ENCODE measurements at regions of chr12 and their contacts with region 1.

Region 1: GRCh38 chr12:56189176-56189917 is at the start of gene SMARCC2:
- DNase-seq: peak; percentile 91
- ATAC-seq: peak; percentile 87
- H3K4me3 ChIP-seq: peak within 1 kb of the TSS; percentile 61 to 89 (median 85)
- H3K4me3 Mint-ChIP-seq: peak within 1 kb of the TSS; percentile 98
- H3K27ac ChIP-seq: peak within 1 kb of the TSS; percentile 75 to 86
- H3K27ac Mint-ChIP-seq: peak within 1 kb of the TSS; percentile 97
- H3K4me1 ChIP-seq: peaks cover 19 to 34% of the 10 kb centered on the region in 2 donors
- H3K4me1 Mint-ChIP-seq: peaks cover 48% of the 10 kb centered on the region
- H3K27me3 ChIP-seq: no peaks in the 10 kb centered on the region
- H3K27me3 Mint-ChIP-seq: no peaks in the 10 kb centered on the region
- CTCF ChIP-seq: peak; percentile 72
- total RNA-seq, gene SMARCC2: 195 and 198 TPM in 2 replicates

Region 2: DNA sequence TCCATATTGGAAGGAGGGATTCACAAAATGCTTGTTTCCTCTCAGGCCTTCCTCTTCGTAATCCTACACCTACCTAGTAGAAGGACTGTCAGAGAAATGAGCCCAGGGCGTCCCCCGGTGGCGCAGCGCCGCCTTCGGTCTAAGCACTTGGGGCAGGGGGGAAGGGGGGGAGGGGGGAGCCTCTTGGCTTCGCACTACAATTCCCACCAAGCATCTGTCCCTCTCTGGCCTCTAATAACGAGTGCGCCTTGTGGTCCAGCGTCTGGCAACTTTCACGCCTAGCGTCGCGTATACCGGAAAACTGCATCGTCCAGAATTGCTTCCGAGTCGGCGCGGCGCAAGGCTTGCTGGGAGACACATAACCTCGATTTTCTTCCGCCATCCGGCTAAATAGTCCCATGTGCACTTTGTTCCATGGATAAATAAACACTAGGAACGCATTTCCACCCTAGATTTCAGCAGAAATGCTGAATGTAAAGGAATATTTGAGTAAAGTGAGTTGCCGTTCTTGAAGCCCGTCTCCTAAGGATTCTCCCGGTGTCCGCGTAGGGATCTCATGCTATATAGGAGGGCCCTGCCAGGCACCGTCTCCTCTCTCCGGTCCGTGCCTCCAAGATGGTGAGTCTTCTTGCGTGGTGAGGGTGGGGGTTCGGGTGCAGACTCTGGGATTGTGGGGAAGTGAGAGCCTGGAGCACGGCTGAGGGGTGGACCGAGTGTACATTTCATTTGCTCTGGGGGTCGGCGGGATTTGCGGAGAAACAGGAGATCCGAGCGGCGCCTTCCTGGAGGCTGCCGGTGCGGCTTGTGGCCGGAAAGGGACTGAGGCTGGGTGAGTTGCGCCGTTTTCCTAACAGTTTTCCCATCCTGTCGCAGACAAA is 147.6 kb before region 1 on chr12 and contains the start of gene RPS26:
- CTCF ChIA-PET with region 1: interaction called, 8 read pairs
- POLR2A ChIA-PET with region 1: interaction called, 4 read pairs
- intact Hi-C with region 1: loop called (anchors 10 kb)
- DNase-seq: peak; percentile 99
- ATAC-seq: peak; percentile 93
- H3K4me3 ChIP-seq: peak within 1 kb of the TSS; percentile 70 to 99 (median 91)
- H3K4me3 Mint-ChIP-seq: peak within 1 kb of the TSS; percentile 98
- H3K27ac ChIP-seq: peak within 1 kb of the TSS; percentile 82 to 90
- H3K27ac Mint-ChIP-seq: peak within 1 kb of the TSS; percentile 97
- H3K4me1 ChIP-seq: peaks cover 19 to 21% of the 10 kb centered on the region in 2 donors
- H3K4me1 Mint-ChIP-seq: peaks cover 24% of the 10 kb centered on the region
- H3K27me3 ChIP-seq: no peaks in the 10 kb centered on the region
- H3K27me3 Mint-ChIP-seq: no peaks in the 10 kb centered on the region
- CTCF ChIP-seq: peak; percentile 67
- total RNA-seq, gene RPS26: 19.4 and 21.0 TPM in 2 replicates

Region 3: DNA sequence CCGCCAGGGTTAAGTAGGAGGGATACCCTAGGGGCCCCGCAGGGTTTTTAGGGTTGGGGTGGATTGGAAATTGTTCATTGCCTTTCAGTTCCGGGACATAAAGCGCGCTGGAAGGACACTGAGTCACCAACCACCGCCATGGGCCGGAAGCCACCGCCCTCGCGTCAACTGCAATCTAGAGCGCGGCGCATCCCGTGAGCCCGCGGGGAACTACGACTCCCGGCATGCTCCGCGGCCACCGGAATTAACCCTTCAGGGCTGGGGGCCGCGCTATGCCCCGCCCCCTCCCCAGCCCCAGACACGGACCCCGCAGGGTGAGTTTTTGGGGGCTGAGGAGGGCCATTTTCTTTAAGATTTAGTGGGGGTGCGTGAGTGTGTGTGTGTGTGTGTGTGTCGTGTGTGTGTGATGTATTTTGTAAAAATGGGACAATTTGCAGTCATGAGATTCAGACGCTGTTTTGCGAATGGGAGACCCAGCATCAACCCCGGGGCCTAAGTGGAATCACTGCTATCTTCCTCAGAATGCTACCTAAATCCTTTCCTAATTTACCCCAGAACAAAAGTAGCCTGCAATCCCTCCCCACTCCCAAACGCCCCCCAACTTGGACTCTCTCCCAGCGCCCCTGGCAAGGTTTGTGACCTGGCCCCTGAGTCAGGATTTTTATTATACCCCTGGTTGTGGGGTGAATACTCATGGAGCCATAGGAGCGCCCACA is 36.9 kb before region 1 on chr12 and contains the start of gene MYL6B:
- CTCF ChIA-PET with region 1: interaction called, 14 read pairs
- POLR2A ChIA-PET with region 1: interaction called, 14 read pairs
- intact Hi-C with region 1: no loop called
- DNase-seq: peak; percentile 91
- ATAC-seq: peak; percentile 91
- H3K4me3 ChIP-seq: peak within 1 kb of the TSS; percentile 54 to 89 (median 81)
- H3K4me3 Mint-ChIP-seq: peak within 1 kb of the TSS; percentile 94
- H3K27ac ChIP-seq: peak within 1 kb of the TSS; percentile 74 to 88
- H3K27ac Mint-ChIP-seq: peak within 1 kb of the TSS; percentile 98
- H3K4me1 ChIP-seq: peaks cover 15 to 29% of the 10 kb centered on the region in 2 donors
- H3K4me1 Mint-ChIP-seq: peaks cover 36% of the 10 kb centered on the region
- H3K27me3 ChIP-seq: no peaks in the 10 kb centered on the region
- H3K27me3 Mint-ChIP-seq: no peaks in the 10 kb centered on the region
- CTCF ChIP-seq: no peak
- total RNA-seq, gene MYL6B: 23.7 and 25.7 TPM in 2 replicates

Region 4: DNA sequence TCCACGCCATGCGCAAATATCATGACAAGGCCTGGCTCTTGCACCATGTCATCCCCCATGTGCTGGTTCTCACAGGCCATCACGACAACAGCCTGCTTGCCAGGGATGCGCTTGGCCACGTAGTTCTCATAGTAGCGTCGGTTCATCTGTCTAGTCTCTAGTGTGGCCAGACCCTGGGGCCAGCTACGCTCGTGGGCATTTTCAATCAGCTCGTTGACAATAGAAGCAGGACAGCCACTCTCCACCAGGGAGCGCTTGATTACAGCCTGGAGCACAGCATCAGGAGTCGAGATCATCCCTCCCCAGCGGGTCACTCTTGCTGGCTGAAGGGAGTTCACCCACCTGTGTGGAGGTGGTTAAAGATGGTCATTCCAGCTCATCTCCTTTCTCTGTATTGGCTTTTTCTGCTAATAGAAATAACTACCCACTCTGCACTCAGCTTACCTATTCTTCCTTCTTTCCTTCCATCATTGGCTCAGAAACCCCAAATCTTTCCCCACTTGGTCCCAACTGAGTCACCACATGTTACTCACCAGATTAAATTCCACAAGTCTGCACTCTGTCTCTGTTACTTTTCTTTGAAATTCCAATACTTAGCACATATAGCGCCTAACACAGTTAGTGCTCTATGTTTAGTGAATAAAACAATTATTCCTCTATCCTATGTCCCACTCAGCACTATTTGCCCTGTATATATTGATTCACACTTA is 17.3 kb after region 1 on chr12:
- CTCF ChIA-PET with region 1: interaction called, 45 read pairs
- POLR2A ChIA-PET with region 1: interaction called, 6 read pairs
- intact Hi-C with region 1: loop called (anchors 2 kb)
- DNase-seq: peak; percentile 65
- ATAC-seq: no peak
- H3K4me3 ChIP-seq: no peak overlapping the region
- H3K4me3 Mint-ChIP-seq: no peak overlapping the region
- H3K27ac ChIP-seq: peak overlapping the region in 1 of 2 donors; percentile 65
- H3K27ac Mint-ChIP-seq: peak overlapping the region; percentile 89
- H3K4me1 ChIP-seq: peaks cover 9 to 18% of the 10 kb centered on the region in 2 donors
- H3K4me1 Mint-ChIP-seq: peaks cover 47% of the 10 kb centered on the region
- H3K27me3 ChIP-seq: no peaks in the 10 kb centered on the region
- H3K27me3 Mint-ChIP-seq: no peaks in the 10 kb centered on the region
- CTCF ChIP-seq: peak; percentile 63

Region 5: GRCh38 chr12:56266693-56267442 is 77.5 kb after region 1 on chr12 and contains the start of gene COQ10A:
- CTCF ChIA-PET with region 1: interaction called, 11 read pairs
- POLR2A ChIA-PET with region 1: interaction called, 7 read pairs
- intact Hi-C with region 1: loop called (anchors 2 kb)
- DNase-seq: peak; percentile 94
- ATAC-seq: peak; percentile 89
- H3K4me3 ChIP-seq: peak within 1 kb of the TSS; percentile 65 to 86 (median 75)
- H3K4me3 Mint-ChIP-seq: peak within 1 kb of the TSS; percentile 91
- H3K27ac ChIP-seq: peak within 1 kb of the TSS; percentile 94
- H3K27ac Mint-ChIP-seq: peak within 1 kb of the TSS; percentile 95
- H3K4me1 ChIP-seq: peaks cover 10 to 15% of the 10 kb centered on the region in 2 donors
- H3K4me1 Mint-ChIP-seq: peaks cover 20% of the 10 kb centered on the region
- H3K27me3 ChIP-seq: no peaks in the 10 kb centered on the region
- H3K27me3 Mint-ChIP-seq: no peaks in the 10 kb centered on the region
- CTCF ChIP-seq: peak; percentile 72
- total RNA-seq, gene COQ10A: 73.5 and 76.3 TPM in 2 replicates

Region 6: DNA sequence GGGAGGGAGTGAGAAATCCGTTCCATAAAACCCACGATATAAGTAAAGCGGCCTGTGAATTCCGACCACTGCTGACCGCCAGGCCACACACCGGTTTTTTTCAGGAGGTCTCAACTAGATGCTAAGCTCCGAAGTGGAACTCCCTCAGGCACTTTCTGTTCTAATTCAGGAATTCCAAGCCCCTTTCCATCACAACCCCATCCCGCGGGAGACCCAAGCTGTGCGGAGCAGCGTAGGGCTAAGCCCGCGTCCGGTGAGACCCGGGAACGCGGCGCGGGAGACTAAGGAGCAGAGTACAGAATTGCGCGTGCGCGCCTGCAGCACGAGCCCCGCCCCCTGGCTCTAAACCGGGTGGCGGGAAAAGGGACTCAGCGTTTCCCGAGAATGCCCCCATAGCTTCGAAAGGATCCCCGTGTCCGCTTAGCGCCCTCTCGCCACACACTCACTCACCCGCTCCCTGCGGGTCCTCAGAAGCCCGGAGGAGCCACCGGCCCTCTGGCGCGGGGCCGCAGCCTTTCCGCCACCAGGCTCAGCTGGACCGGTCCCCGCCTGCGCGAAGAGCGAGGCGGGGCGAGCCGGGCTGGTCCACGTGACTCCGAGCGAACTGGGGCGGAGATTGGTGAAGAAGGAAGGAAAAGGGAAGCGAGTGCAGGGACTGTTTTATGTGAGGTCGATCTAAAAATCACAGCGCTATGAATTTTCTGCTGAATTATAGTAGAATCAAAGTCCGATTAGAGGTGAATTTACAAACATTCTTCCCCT is 259.7 kb after region 1 on chr12 and contains the start of gene TIMELESS:
- CTCF ChIA-PET with region 1: interaction called, 4 read pairs
- POLR2A ChIA-PET with region 1: interaction called, 4 read pairs
- intact Hi-C with region 1: loop called (anchors 5 kb)
- DNase-seq: peak; percentile 95
- ATAC-seq: peak; percentile 96
- H3K4me3 ChIP-seq: peak within 1 kb of the TSS; percentile 69 to 98 (median 83)
- H3K4me3 Mint-ChIP-seq: peak within 1 kb of the TSS; percentile 90
- H3K27ac ChIP-seq: peak within 1 kb of the TSS; percentile 53 to 85
- H3K27ac Mint-ChIP-seq: peak within 1 kb of the TSS; percentile 92
- H3K4me1 ChIP-seq: peaks cover 10 to 12% of the 10 kb centered on the region in 2 donors
- H3K4me1 Mint-ChIP-seq: peaks cover 23% of the 10 kb centered on the region
- H3K27me3 ChIP-seq: no peaks in the 10 kb centered on the region
- H3K27me3 Mint-ChIP-seq: no peaks in the 10 kb centered on the region
- CTCF ChIP-seq: no peak
- total RNA-seq, gene TIMELESS: 44.4 and 46.6 TPM in 2 replicates